ENCODE measurements at regions of chr2 and their contacts with region 1.

Region 1: GRCh38 chr2:74958274-74959105 is at the start of gene POLE4:
- DNase-seq: peak; percentile 98
- H3K4me3 Mint-ChIP-seq: peak within 1 kb of the TSS; percentile 82
- H3K27ac Mint-ChIP-seq: peak within 1 kb of the TSS; percentile 86
- H3K4me1 Mint-ChIP-seq: peaks cover 47% of the 10 kb centered on the region
- H3K27me3 Mint-ChIP-seq: no peaks in the 10 kb centered on the region
- total RNA-seq, gene POLE4: 53.1 and 58.3 TPM in 2 replicates

Region 2: GRCh38 chr2:74945788-74946331 is 12.6 kb before region 1 on chr2:
- intact Hi-C with region 1: loop called (anchors 1 kb)
- DNase-seq: no peak
- H3K4me3 Mint-ChIP-seq: no peak overlapping the region
- H3K27ac Mint-ChIP-seq: no peak overlapping the region
- H3K4me1 Mint-ChIP-seq: peaks cover 15% of the 10 kb centered on the region
- H3K27me3 Mint-ChIP-seq: peaks cover 5% of the 10 kb centered on the region

Region 3: DNA sequence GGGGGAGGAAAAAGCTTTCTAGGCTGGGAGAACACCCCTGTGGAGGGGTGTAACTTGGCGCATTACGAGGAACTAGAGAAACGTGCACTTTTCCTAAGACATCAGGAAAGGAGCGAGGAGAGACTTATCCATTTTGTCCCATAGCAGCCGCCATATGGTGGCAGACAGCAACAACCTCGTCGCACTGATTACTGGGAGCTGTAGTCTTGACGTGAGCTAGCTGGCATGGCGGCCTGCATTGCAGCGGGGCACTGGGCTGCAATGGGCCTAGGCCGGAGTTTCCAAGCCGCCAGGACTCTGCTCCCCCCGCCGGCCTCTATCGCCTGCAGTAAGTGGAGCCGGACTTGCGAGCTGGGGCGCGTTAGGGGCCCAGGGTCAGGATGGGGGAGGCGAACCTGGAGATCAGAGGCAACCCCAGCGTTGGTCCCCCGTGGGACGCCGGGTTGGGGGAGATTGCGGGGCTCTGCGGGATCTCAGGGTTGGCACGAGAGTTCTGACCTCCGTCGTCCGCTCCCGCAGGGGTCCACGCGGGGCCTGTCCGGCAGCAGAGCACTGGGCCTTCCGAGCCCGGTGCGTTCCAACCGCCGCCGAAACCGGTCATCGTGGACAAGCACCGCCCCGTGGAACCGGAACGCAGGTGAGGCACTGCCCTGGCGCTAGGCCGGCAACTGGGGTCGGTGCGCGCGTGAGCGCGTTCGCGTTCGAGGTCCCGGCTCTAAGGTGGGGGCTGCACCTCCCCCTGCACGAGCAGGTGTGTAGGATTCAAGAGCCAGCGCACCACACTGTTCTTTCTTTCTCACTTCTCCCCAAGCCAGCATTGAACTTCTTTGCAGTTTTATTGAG is 688.3 kb after region 1 on chr2 and contains the start of gene MRPL19:
- intact Hi-C with region 1: loop called (anchors 2 kb)
- DNase-seq: peak; percentile 93
- H3K4me3 Mint-ChIP-seq: peak within 1 kb of the TSS; percentile 94
- H3K27ac Mint-ChIP-seq: peak within 1 kb of the TSS; percentile 97
- H3K4me1 Mint-ChIP-seq: peaks cover 17% of the 10 kb centered on the region
- H3K27me3 Mint-ChIP-seq: no peaks in the 10 kb centered on the region
- total RNA-seq, gene MRPL19: 70.6 and 76.8 TPM in 2 replicates